Kidney (tissue), 22 donors: ENCODE measurements at regions of chr17 and their contacts with region 1.

Region 1: GRCh38 chr17:57243171-57243948 is 13.0 kb upstream of the MSI2 start:
- DNase-seq: peak in 4 of 5 donors; percentile 66 to 75 (median 68)
- H3K4me3 ChIP-seq: no peak overlapping the region
- H3K27ac ChIP-seq: no peak overlapping the region
- H3K4me1 ChIP-seq: peaks cover 0 to 2% (median 0%) of the 10 kb centered on the region in 3 donors
- H3K27me3 ChIP-seq: no peaks in the 10 kb centered on the region
- CTCF ChIP-seq: peak; percentile 99

Region 2: DNA sequence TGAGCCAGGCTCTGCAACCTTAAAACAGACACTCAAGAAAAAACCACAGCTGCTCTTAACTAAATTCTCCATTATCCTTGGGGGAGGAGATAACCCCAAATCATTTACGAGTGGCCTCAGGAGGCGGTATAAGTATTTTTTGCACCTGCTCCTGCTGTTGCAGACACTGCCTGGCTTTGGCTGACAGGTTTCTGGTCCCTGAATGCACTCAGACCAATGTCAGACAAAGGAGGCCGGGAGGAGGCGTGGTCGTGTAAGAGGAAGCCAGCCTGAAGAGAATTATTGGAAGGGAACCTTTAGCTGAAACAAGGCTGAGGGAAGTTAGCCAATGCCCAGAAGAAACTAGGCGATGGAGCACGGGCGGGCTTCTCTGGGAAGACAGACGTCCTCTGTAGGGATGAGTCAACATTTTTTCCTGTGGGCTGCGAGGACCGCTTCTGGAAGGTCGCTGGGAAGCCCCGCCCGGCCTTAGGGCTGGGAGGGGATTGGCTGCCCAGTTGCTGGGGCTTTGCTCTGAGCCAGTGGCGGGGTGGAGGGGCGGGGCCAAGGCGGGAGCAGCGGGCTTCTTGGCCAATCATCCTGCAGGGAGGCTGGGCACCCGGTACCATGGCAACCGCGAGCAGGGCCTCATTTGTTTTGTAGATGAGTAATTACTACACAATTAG is 419.4 kb after region 1 on chr17:
- intact Hi-C with region 1: loop called (anchors 10 kb)
- DNase-seq: peak; percentile 96 to 99 (median 98)
- H3K4me3 ChIP-seq: peak overlapping the region; percentile 51 to 66 (median 55)
- H3K27ac ChIP-seq: peak overlapping the region; percentile 88 to 98
- H3K4me1 ChIP-seq: peaks cover 6 to 46% (median 36%) of the 10 kb centered on the region in 3 donors
- H3K27me3 ChIP-seq: no peaks in the 10 kb centered on the region
- CTCF ChIP-seq: peak; percentile 6

Region 3: GRCh38 chr17:57747221-57748017 is 504.1 kb after region 1 on chr17:
- intact Hi-C with region 1: loop called (anchors 10 kb)
- DNase-seq: peak in 4 of 5 donors; percentile 59 to 84 (median 68)
- H3K4me3 ChIP-seq: no peak overlapping the region
- H3K27ac ChIP-seq: no peak overlapping the region
- H3K4me1 ChIP-seq: no peaks in the 10 kb centered on the region
- H3K27me3 ChIP-seq: no peaks in the 10 kb centered on the region
- CTCF ChIP-seq: peak; percentile 77